ENCODE measurements at regions of chr22 and their contacts with region 1.

Region 1: GRCh38 chr22:41746567-41747400 is 47.5 kb downstream of the MEI1 start:
- DNase-seq: peak; percentile 48 to 66 (median 51)
- H3K4me3 ChIP-seq: no peak overlapping the region
- H3K4me3 Mint-ChIP-seq: no peak overlapping the region
- H3K27ac ChIP-seq: no peak overlapping the region
- H3K27ac Mint-ChIP-seq: peak overlapping the region in 1 of 7 donors; percentile 2
- H3K4me1 ChIP-seq: no peaks in the 10 kb centered on the region
- H3K4me1 Mint-ChIP-seq: peaks cover 0 to 5% (median 1%) of the 10 kb centered on the region in 4 donors
- H3K27me3 ChIP-seq: no peaks in the 10 kb centered on the region
- H3K27me3 Mint-ChIP-seq: peaks cover 0 to 2% of the 10 kb centered on the region in 2 donors

Region 2: DNA sequence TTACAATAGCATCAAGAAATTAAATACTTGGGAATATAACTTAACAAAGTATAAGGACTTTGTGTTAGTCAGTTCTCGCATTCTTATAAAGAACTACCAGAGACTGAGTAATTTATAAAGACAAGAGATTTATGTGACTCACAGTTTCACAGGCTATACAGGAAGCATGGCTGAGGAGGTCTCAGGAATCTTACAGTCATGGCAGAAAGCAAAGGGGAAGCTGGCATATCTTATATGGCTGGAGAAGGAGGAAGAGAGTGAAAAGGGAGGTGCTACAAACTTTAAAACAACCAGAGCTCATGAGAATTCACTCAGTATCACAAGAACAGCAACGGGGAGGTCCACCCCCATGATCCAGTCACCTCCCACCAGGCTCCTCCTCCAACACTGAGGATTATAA is 21.6 kb after region 1 on chr22:
- CTCF ChIA-PET with region 1: interaction called, 15 read pairs
- POLR2A ChIA-PET with region 1: no interaction called
- intact Hi-C with region 1: no loop called
- DNase-seq: no peak
- H3K4me3 ChIP-seq: no peak overlapping the region
- H3K4me3 Mint-ChIP-seq: no peak overlapping the region
- H3K27ac ChIP-seq: no peak overlapping the region
- H3K27ac Mint-ChIP-seq: no peak overlapping the region
- H3K4me1 ChIP-seq: no peaks in the 10 kb centered on the region
- H3K4me1 Mint-ChIP-seq: no peaks in the 10 kb centered on the region
- H3K27me3 ChIP-seq: no peaks in the 10 kb centered on the region
- H3K27me3 Mint-ChIP-seq: no peaks in the 10 kb centered on the region

Region 3: DNA sequence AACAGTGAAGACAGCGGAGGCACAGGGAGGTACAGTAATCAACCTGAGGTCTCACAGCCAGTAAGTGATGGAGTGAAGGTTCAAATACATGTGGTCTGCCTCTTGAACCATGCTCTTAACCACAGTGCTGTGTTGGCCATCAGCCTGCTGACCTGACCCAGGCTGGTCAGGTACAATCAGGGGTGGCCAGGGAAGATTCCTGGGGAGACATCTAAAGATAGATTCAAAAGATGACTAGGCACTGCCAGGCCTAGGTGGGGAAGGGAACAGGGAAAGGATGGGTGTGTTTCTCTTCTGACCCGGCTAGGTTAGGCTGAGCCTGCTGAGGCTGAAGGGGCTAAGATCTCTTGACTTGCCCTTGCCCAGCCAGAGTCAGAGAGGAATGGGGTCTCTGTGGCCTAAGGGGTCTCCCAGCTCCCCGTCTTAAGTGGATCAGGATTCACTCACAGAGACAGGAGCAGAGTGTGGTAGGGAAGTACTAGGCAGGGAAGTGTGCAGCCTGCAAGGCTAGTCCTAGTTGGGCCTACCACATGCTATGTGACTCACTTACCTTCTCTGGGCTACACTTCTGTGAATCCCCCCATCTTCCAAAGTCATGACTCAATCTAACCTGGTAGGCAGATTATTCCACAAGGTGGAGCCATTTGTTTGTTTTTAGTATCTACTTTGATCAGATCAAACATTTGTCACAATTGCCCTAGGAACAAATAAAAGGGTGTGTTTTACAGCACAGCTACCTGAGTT is 75.7 kb after region 1 on chr22:
- CTCF ChIA-PET with region 1: interaction called, 19 read pairs
- POLR2A ChIA-PET with region 1: no interaction called
- intact Hi-C with region 1: no loop called
- DNase-seq: peak; percentile 69 to 81 (median 72)
- H3K4me3 ChIP-seq: no peak overlapping the region
- H3K4me3 Mint-ChIP-seq: no peak overlapping the region
- H3K27ac ChIP-seq: peak overlapping the region; percentile 19
- H3K27ac Mint-ChIP-seq: peak overlapping the region; percentile 47 to 92 (median 76)
- H3K4me1 ChIP-seq: peaks cover 5% of the 10 kb centered on the region
- H3K4me1 Mint-ChIP-seq: peaks cover 5 to 14% (median 10%) of the 10 kb centered on the region in 4 donors
- H3K27me3 ChIP-seq: no peaks in the 10 kb centered on the region
- H3K27me3 Mint-ChIP-seq: no peaks in the 10 kb centered on the region